H1 (cell line): ENCODE measurements at regions of chr4 and their contacts with region 1.

Region 1: DNA sequence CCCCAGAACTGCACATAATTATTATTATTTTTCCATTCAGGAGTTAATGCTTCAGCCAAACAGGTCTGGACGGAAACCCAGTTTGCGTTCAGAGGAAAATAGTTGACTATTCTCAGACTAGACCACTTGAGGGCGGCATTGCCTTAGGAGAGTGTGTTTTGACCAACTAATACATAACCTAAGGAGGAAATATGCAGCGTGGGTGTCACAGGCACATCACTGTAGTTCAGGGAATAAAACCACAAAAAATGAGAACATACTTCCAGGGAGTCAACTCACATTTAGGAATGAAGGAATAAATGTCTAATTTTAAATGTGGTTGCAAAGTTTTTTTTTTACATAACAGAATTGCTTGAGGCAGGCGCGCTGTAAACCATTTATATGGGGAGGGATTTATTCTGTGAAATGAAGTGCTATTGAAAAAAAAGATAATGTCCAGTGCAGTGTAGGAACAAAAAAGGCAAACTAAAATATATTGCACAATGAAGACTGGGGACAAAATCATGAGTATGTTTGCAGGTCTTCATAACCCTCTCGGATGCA is 93.3 kb downstream of the SYNPO2 start:
- DNase-seq: peak in 1 of 2 experiments; percentile 56
- H3K4me3 ChIP-seq: no peak overlapping the region
- H3K27ac ChIP-seq: no peak overlapping the region
- H3K4me1 ChIP-seq: peaks cover 0 to 9% (median 0%) of the 10 kb centered on the region in 4 experiments; a peak in 2 of 7 replicates
- H3K27me3 ChIP-seq: no peaks in the 10 kb centered on the region
- CTCF ChIP-seq: peak in 2 of 3 experiments; percentile 73 to 74; a peak in 3 of 4 replicates
- EP300 ChIP-seq: no peak
- POLR2A ChIP-seq: no peak
- RAD21 ChIP-seq: peak; percentile 95 to 96

Region 2: GRCh38 chr4:118942465-118942864 is 39.4 kb before region 1 on chr4:
- CTCF ChIA-PET with region 1: no interaction called
- POLR2A ChIA-PET with region 1: no interaction called
- DNase-seq: no peak
- H3K4me3 ChIP-seq: no peak overlapping the region
- H3K27ac ChIP-seq: no peak overlapping the region
- H3K4me1 ChIP-seq: peaks cover 0 to 5% (median 4%) of the 10 kb centered on the region in 4 experiments; a peak in 5 of 7 replicates
- H3K27me3 ChIP-seq: no peaks in the 10 kb centered on the region
- CTCF ChIP-seq: no peak
- EP300 ChIP-seq: no peak
- POLR2A ChIP-seq: no peak
- RAD21 ChIP-seq: no peak

Region 3: DNA sequence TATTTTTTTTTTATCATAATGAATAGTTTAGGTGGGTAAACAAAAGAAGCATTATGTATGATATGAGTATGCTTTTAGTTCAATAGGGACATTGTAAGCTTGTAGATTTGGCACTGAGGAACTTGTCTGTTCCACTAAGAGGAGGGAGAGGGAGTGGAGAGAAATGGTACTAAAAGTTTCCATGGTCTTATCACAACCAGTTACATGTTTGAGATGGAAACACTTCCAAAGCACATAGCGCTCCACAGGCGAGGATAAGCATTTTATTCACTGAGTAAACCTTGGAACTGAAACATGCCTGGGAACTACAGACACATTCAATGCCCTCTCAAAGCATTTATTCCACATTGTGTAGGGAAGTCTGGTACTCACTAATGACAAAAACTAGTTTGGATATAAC is 169.3 kb after region 1 on chr4:
- CTCF ChIA-PET with region 1: no interaction called
- POLR2A ChIA-PET with region 1: no interaction called
- DNase-seq: no peak
- H3K4me3 ChIP-seq: no peak overlapping the region
- H3K27ac ChIP-seq: no peak overlapping the region
- H3K4me1 ChIP-seq: peaks cover 0 to 4% (median 0%) of the 10 kb centered on the region in 4 experiments; a peak in 1 of 7 replicates
- H3K27me3 ChIP-seq: no peaks in the 10 kb centered on the region
- CTCF ChIP-seq: no peak
- EP300 ChIP-seq: no peak
- POLR2A ChIP-seq: no peak
- RAD21 ChIP-seq: no peak

Region 4: GRCh38 chr4:119289313-119289712 is 307.4 kb after region 1 on chr4:
- CTCF ChIA-PET with region 1: interaction called, 13 read pairs
- POLR2A ChIA-PET with region 1: no interaction called
- DNase-seq: no peak
- H3K4me3 ChIP-seq: no peak overlapping the region
- H3K27ac ChIP-seq: no peak overlapping the region
- H3K4me1 ChIP-seq: no peaks in the 10 kb centered on the region
- H3K27me3 ChIP-seq: no peaks in the 10 kb centered on the region
- CTCF ChIP-seq: no peak
- EP300 ChIP-seq: no peak
- POLR2A ChIP-seq: no peak
- RAD21 ChIP-seq: no peak

Region 5: GRCh38 chr4:119300101-119300978 is 318.4 kb after region 1 on chr4:
- CTCF ChIA-PET with region 1: interaction called, 12 read pairs
- POLR2A ChIA-PET with region 1: no interaction called
- DNase-seq: peak; percentile 79 to 93
- H3K4me3 ChIP-seq: peak overlapping the region; percentile 85 to 96 (median 90)
- H3K27ac ChIP-seq: peak overlapping the region; percentile 75
- H3K4me1 ChIP-seq: peaks cover 2 to 6% (median 3%) of the 10 kb centered on the region in 4 experiments; a peak in 6 of 7 replicates
- H3K27me3 ChIP-seq: no peaks in the 10 kb centered on the region
- CTCF ChIP-seq: peak in 1 of 3 experiments; percentile 5; a peak in 1 of 4 replicates
- EP300 ChIP-seq: no peak
- POLR2A ChIP-seq: peak; percentile 64 to 86
- RAD21 ChIP-seq: peak in 1 of 2 experiments; percentile 9; a peak in 1 of 4 replicates